Posterior vena cava (tissue), 2 donors: ENCODE measurements at regions of chr6 and their contacts with region 1.

Region 1: DNA sequence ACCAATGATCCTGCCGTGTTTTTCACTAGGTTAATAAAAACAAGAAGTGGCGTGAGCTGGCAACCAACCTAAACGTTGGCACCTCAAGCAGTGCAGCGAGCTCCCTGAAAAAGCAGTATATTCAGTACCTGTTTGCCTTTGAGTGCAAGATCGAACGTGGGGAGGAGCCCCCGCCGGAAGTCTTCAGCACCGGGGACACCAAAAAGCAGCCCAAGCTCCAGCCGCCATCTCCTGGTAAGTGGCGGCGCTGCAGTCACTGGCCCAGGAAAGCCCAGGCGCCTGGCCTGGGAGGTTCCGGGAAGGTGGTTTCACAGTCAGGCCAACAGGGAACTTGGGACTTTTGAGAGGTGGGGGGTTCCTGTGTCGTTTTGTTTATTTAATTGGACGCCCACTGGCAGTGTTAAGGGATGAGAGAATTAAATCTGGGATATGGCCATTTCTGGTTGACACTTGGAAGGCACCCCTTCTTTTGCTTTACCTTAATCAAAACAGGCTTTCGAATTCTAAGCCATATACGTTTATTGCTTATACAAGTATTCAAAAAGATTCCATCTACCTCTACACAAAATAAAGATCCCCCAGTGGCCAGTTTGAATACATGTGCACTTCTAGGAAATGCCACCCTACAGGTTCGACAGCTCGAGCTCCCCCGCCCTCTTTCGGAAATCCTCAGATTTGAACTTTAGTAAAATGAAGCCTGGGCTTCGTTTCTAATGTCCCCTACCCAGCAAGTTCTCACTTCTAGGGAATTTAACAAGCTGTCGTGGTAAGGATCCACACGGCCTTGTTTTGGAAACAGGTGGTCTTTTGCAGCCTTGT is 138.9 kb downstream of the TMEM242 start:
- DNase-seq: peak; percentile 88

Region 2: DNA sequence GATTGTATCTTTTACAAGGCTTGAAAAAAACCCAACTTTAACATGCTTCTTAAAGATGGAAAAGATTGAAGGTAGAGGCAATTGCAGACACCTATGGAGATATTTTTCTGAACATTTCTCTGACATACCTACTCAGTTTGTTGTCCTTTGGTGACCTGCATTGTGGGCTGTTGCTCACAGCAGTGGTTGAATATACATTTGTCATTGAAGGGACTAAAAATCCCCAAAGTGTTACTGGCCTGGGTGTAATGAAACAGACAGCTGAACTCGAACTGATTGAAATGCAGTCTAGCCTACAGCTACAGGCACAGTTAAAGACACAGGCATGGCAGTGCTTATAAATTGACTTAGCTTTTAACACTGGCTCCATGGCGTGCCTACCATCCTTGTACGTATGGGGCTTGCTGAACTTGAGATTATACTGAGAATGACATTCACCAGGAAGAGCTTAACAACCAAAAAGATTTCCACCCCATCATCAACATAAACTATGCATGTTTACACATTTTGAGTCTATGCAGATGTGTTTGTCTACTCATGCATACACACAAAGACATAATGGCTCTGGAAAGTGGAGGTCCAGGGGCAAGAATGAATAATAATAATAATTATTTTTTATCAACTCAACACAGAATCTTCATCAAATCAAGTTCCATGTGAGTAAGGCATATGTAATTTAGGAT is 1645.6 kb before region 1 on chr6:
- intact Hi-C with region 1: loop called in 1 of 2 experiments (anchors 5 kb)
- DNase-seq: no peak

Region 3: DNA sequence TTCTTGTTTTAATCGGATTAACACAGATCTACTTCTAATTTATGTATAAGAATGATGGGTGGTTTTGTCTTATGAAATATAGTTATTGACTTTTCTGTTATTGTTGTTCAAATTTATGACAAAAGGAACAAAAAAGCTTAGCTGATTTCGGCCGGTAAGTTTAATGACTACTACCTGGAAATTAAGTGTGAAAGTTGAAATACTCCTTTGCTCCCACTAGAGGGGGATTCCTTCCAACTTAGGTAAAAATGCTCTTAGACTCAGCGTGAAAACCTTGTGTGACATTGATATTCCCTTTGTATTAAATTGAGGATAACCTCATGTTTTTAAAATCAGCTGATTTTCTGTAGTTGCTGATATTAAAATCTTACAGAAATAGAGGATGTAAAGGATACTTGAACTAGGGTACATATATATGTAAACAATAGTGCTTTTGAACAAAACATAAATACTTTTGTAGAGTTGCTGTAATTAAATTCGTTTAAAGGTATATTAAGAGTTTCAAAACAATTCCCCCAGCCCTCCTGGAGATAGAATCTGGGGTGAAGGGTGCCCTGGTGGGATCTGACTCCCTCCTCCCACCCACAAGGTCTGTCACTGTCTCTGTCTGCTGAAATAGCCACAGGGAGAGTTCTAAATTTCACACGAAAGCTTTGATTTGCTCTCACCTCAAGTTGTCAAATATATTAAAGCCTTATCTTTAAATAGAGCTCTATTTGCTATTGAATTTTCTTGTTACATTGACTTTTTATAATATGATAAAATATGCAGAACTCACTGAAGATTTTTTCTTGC is 149.8 kb before region 1 on chr6:
- intact Hi-C with region 1: loop called in 1 of 2 experiments (anchors 10 kb)
- DNase-seq: no peak

Region 4: DNA sequence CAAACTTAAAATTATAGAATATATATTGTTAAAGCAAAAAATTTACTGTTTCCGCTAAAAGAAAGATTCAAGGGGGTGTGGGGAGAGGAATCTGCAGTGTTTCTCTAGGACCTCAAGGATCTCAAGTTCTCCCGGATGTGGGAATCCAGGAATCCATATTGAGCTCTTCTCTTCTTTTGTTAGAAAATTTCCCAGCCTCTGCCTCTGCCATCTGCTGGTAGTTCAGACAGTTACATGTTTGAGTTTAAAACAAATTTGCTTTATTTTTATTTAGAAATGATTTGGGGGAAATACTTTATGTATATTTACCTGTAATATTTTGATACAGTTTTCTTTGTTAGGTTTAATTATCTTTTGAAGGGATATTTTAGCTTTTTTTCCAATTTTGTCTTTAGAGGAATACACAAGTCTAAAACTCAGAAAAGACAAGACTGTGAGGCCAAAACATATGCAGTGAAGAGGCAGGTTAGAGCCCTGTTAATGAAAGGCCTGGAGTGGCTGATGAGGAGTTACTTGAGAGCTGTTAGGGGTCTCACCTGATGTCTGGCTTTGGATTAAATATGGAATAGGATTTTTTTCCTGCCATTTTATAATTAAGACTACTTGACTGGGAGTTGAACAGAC is 138.5 kb before region 1 on chr6:
- intact Hi-C with region 1: loop called in 1 of 2 experiments (anchors 10 kb)
- DNase-seq: no peak